Activated naive CD8-positive, alpha-beta T cell treated with anti-CD3 and anti-CD28 coated beads, Interleukin-2, amount 10 ng/mL, durations not matched to agents 7 days and 5 days (primary cell): ENCODE measurements at regions of chr6 and their contacts with region 1.

Region 1: DNA sequence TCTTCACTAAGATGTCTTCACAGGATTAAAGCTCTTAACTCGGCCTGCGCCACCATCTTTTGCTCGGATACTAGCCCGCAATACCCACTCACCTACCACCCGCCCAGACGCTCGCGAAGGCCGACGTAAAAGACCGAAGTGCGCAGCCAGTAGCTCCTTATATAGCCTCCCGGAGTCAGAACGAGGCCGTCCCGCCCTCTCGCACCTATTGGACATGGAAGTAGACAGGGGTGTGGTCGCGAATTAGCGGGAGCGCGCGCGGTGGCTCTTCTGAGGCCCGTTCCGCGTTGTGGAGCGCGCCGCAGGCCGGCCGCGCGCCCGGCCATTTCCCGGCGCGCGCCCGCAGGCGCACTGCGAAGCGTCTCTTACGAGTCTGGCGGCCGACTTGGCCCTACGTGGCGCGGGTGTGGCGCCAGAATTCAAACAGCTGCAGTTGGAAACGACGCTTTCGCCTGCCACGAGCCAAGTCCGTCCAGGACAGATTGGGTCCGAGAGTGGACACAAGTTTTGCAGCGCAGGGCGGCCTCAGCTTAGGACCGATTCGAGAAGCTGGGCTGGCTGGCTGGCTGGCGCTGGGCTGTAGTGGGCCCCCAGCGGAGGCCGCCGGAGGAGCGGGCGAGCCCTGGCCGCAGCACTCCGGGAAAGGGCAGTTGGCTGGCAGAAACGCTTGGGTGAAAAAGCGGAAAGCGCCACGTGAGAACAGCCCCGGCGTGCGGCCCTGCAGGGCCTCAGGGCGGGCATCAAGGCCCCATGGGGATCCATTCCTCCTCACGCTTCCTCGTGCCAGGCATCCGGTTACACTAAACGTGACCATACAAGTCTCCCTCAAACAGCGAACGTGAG is 36.1 kb upstream of the SYNCRIP start:
- DNase-seq: peak; percentile 98
- ATAC-seq: peak; percentile 85
- H3K4me3 Mint-ChIP-seq: peak overlapping the region; percentile 96
- H3K27ac Mint-ChIP-seq: peak overlapping the region; percentile 99
- H3K4me1 Mint-ChIP-seq: peaks cover 42% of the 10 kb centered on the region
- H3K27me3 Mint-ChIP-seq: no peaks in the 10 kb centered on the region

Region 2: DNA sequence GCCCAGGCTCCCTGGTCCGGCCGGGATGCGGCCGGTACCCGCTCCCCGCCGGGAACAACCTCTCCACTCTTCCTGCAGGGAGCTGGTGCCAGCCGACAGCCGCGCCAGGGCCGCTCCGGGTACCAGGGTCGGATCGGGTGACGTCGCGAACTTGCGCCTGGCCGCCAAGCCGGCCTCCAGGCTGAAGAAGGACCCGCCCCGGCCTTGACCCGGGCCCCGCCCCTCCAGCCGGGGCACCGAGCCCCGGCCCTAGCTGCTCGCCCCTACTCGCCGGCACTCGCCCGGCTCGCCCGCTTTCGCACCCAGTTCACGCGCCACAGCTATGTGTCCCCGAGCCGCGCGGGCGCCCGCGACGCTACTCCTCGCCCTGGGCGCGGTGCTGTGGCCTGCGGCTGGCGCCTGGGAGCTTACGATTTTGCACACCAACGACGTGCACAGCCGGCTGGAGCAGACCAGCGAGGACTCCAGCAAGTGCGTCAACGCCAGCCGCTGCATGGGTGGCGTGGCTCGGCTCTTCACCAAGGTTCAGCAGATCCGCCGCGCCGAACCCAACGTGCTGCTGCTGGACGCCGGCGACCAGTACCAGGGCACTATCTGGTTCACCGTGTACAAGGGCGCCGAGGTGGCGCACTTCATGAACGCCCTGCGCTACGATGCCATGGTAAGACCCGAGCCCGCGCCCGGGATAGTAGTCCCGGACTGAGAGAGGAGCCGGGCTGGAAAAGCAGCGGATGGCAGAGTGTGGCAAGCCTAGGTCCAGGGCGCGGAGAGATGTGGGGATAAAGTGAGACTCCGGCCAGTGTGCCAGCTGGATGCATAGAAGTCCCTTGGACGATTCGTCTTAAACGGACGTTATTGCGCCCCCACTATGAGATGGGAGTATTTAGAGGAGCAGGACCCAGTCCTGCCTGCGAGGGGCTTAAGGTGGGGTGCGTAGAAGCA is 228.7 kb before region 1 on chr6 and contains the start of gene NT5E:
- POLR2A ChIA-PET with region 1: interaction called, 25 read pairs
- DNase-seq: peak; percentile 77
- ATAC-seq: peak; percentile 54
- H3K4me3 Mint-ChIP-seq: peak within 1 kb of the TSS; percentile 96
- H3K27ac Mint-ChIP-seq: peak within 1 kb of the TSS; percentile 88
- H3K4me1 Mint-ChIP-seq: peaks cover 52% of the 10 kb centered on the region
- H3K27me3 Mint-ChIP-seq: no peaks in the 10 kb centered on the region
- total RNA-seq, gene NT5E: 26.8 to 30.7 TPM

Region 3: DNA sequence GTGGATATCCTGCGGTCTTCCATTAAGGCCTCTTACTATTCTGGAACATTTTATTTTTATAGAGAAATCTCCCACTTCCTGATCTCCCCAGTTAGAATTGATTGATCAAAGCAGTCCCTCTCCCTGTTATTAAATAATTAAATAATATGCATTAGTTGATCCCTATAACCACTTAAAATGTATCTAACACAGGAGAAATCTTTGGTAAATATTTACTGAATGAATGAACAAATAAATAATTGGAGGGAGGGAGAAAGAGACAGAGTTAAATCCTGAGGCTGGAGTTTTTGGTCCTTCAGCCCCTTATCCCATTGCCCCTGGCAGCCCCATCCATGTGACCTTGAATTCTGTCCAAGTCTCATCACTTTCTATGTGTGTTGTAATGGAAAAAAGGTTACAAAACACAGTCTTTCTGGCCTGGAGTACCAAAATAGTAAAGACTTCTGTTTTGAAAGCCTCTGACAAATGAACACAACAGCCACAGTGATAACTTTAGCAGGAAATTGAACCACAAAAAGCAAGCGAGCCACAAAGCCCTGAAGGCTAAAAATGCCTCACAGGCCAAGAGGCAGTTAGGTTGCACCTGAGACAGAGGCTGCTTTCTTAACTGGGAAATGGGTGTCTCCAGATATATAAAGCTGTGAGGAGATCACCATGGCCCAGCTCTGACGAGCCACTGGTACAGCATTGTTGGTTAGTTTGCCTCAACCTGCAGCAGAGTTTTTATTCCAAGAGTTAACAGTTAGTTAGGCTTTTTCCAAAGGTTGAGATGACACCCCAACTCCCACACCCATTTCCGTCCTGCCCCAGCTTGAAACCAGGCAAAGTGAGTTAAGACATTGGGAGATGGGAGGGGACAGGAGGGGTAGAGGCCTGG is 217.7 kb before region 1 on chr6:
- POLR2A ChIA-PET with region 1: interaction called, 10 read pairs
- DNase-seq: peak; percentile 47
- ATAC-seq: peak; percentile 78
- H3K4me3 Mint-ChIP-seq: peak overlapping the region; percentile 54
- H3K27ac Mint-ChIP-seq: peak overlapping the region; percentile 92
- H3K4me1 Mint-ChIP-seq: peaks cover 78% of the 10 kb centered on the region
- H3K27me3 Mint-ChIP-seq: no peaks in the 10 kb centered on the region

Region 4: DNA sequence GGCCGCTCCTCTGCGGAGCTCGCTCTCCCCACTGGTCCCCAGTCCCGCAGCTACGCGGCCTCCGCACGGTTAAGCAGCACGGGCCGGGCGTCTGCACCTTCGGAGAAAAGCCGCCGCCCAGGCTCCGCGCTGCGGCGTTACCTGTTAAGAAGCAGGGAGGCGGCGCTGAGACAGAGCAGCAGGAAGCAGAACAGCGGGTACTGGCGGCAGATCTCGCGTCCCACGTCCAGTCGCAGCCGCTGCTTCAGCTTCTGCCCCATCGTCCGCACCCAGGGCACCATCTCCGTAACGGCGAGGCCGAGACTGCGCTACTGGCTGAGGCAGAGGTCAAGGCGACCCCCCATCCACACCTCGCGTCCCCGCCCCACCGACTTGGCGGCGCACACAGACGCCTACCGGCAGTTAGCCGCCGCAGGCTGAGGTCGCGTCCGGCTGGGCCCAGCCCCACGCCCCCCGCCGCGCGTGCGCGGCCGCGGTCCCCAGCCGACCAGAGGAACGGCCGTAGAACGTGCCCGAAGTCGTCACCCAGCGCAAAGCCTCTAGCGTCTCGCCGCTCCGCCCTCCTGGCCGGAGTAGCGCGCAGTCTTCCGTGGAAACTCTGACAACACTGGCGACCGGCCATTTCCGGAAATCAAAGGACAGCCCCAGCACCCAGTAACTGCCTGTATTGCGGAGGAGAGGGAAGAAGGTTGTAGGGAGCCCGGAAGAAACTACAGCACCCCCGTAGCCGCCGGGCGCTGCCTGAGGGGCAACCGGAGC is 85.2 kb before region 1 on chr6 and contains the start of gene SNX14:
- POLR2A ChIA-PET with region 1: interaction called, 66 read pairs
- DNase-seq: peak; percentile 81
- ATAC-seq: peak; percentile 85
- H3K4me3 Mint-ChIP-seq: peak within 1 kb of the TSS; percentile 95
- H3K27ac Mint-ChIP-seq: peak within 1 kb of the TSS; percentile 96
- H3K4me1 Mint-ChIP-seq: peaks cover 25% of the 10 kb centered on the region
- H3K27me3 Mint-ChIP-seq: peaks cover 2% of the 10 kb centered on the region
- total RNA-seq, gene SNX14: 55.6 to 67.5 TPM

Region 5: DNA sequence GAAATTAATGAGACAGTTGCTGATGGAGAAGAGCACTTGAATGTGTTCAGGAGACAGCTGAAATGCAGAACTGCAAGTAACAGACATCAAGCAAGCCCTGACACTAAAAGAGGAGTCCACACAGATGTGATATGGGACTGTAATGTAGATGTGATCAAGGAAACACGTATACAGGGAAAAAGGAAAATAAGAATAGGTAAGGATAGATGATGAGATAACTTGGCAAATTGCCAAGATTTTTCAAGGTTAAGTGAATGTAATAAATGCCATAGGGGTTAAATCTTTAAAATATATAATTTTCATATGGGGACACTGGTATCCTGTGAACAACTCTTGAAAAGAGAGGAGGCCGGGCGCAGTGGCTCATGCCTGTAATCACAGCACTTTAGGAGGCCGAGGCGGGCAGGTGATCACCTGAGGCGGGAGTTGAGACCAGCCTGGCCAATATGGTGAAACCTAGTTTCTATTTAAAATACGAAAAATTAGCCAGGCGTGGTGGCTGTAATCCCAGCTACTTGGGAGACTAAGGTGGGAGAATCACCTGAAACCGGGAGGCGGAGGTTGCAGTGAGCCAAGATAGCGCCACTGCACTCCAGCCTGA is 78.0 kb before region 1 on chr6:
- POLR2A ChIA-PET with region 1: interaction called, 10 read pairs
- DNase-seq: no peak
- ATAC-seq: no peak
- H3K4me3 Mint-ChIP-seq: no peak overlapping the region
- H3K27ac Mint-ChIP-seq: peak overlapping the region; percentile 28
- H3K4me1 Mint-ChIP-seq: peaks cover 6% of the 10 kb centered on the region
- H3K27me3 Mint-ChIP-seq: no peaks in the 10 kb centered on the region

Region 6: GRCh38 chr6:85642774-85643536 is 35.9 kb before region 1 on chr6 and contains the start of gene SYNCRIP:
- POLR2A ChIA-PET with region 1: interaction called, 645 read pairs
- DNase-seq: peak; percentile 99
- ATAC-seq: peak; percentile 84
- H3K4me3 Mint-ChIP-seq: peak within 1 kb of the TSS; percentile 97
- H3K27ac Mint-ChIP-seq: peak within 1 kb of the TSS; percentile 100
- H3K4me1 Mint-ChIP-seq: peaks cover 39% of the 10 kb centered on the region
- H3K27me3 Mint-ChIP-seq: peaks cover 3% of the 10 kb centered on the region
- total RNA-seq, gene SYNCRIP: 94.4 to 99.3 TPM

Region 7: GRCh38 chr6:85650606-85651005 is 28.2 kb before region 1 on chr6:
- POLR2A ChIA-PET with region 1: interaction called, 645 read pairs
- DNase-seq: no peak
- ATAC-seq: no peak
- H3K4me3 Mint-ChIP-seq: no peak overlapping the region
- H3K27ac Mint-ChIP-seq: no peak overlapping the region
- H3K4me1 Mint-ChIP-seq: peaks cover 1% of the 10 kb centered on the region
- H3K27me3 Mint-ChIP-seq: peaks cover 5% of the 10 kb centered on the region

Region 8: DNA sequence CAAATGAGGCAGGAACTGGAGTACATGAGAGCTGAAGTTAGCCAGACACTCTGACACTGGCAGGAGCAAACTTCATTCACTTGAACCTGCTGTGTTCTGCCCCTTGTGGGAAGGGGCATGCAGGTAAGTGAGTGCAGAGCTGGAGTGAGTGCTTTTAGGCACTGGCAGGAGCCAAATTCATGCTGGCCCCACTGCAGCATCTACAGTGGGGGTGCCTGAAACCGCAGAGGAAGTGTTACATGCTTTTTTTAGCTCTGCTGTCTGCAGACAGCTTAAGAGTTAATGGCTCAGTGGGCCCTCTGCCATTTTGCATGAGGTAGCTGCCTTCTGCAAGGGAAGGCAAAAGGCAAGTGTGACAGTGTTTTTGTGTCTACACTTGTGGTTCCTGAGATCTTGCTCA is 131.7 kb after region 1 on chr6:
- POLR2A ChIA-PET with region 1: no interaction called
- DNase-seq: no peak
- ATAC-seq: no peak
- H3K4me3 Mint-ChIP-seq: no peak overlapping the region
- H3K27ac Mint-ChIP-seq: no peak overlapping the region
- H3K4me1 Mint-ChIP-seq: no peaks in the 10 kb centered on the region
- H3K27me3 Mint-ChIP-seq: no peaks in the 10 kb centered on the region

Region 9: DNA sequence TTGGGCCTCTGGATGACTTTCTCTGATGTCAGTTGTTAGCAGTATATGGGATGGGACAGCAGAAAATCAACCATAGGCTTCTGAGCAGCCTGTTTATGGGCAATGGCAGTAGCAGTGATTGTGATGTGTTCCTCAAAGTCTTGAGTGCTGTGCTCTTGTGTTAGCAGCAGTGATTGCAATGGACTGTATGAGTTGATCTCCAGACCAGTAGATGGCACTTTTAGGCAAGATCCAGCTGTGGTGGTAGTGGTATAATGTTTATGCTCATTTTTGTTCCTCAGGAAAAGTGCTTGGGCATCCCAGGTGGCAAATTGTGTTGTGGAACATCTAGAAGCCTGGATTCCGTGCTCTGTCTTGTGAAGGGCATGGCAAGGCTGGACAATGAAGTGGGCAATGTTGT is 145.5 kb after region 1 on chr6:
- POLR2A ChIA-PET with region 1: no interaction called
- DNase-seq: no peak
- ATAC-seq: no peak
- H3K4me3 Mint-ChIP-seq: no peak overlapping the region
- H3K27ac Mint-ChIP-seq: no peak overlapping the region
- H3K4me1 Mint-ChIP-seq: no peaks in the 10 kb centered on the region
- H3K27me3 Mint-ChIP-seq: no peaks in the 10 kb centered on the region